Psoas muscle (tissue), 8 donors: ENCODE measurements at regions of chr17 and their contacts with region 1.

Region 1: DNA sequence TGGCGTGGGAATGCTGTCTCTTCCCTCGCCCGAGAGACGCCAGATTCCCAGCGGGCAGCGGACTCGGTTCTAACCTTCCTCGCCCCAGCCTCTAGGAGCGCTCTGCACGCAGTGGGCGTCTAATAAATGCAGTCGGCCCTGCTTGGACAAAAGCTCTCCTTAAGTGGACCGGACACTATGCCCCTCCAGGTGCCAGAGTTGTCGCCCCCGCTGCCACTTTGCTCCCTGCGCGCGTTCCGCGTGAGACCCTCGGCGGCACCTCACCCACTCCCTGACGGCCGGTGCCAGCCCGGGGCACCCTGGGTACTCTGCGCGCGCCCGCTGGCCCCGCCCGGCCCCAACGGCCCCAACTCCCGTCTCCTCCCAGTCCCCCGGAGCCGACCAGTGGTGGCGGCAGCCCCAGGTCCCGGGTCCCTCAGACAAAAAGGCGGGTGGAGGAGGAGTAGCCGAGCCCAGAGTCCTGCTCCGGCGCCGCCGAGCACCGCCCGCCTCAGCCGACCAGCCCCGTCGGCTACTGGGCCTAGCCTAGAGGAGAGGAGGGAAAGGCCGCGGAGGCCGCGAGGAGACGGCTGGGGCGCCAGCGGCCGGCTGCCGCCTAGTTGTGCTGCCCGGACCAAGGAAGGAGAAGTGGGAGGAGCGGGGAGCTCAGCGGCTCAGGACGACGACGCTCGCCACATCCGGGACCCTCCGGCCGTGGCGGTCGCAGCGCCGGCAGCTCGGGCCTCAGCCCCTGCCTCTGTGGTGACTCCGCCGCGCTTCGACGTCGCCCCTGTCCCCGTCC is 123.0 kb downstream of the GOSR1 start:
- DNase-seq: peak; percentile 84 to 89
- ATAC-seq: peak; percentile 97 to 99 (median 98)
- H3K4me3 ChIP-seq: peak overlapping the region; percentile 72
- H3K27ac ChIP-seq: peak overlapping the region; percentile 81
- H3K4me1 ChIP-seq: no peaks in the 10 kb centered on the region
- H3K27me3 ChIP-seq: no peaks in the 10 kb centered on the region
- CTCF ChIP-seq: peak; percentile 52

Region 2: GRCh38 chr17:30477083-30477773 is 123.0 kb before region 1 on chr17 and contains the start of gene GOSR1:
- intact Hi-C with region 1: loop called in 1 of 2 experiments (anchors 2 kb)
- DNase-seq: peak; percentile 93 to 96
- ATAC-seq: peak; percentile 99 to 100 (median 100)
- H3K4me3 ChIP-seq: peak within 1 kb of the TSS; percentile 75
- H3K27ac ChIP-seq: peak within 1 kb of the TSS; percentile 94
- H3K4me1 ChIP-seq: peaks cover 22% of the 10 kb centered on the region
- H3K27me3 ChIP-seq: peaks cover 0 to 2% (median 0%) of the 10 kb centered on the region in 3 donors
- CTCF ChIP-seq: peak; percentile 75
- total RNA-seq, gene GOSR1: 26.8 to 38.2 (median 27.2) TPM